ENCODE measurements at regions of chr4 and their contacts with region 1.

Region 1: DNA sequence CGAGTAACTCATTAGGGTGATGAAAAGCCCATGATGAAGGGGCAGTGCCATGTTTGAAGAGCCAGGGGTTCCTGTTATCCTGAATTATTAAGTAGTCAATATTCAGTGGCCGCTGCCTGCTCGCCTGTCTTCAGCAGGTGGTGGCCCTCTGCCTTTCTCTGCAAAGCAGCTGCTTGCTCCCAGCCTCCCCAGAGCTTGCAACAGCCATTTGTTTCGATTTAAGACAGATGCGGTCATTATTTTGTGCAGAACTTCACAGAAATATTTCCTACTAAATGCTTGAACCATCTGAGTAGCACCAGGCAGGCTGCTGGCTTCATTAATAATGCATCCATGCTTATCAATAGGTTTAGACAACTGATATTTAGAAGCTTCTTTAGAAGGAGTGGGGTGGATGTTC is 104.3 kb upstream of the TTC29 start:
- DNase-seq: no peak

Region 2: DNA sequence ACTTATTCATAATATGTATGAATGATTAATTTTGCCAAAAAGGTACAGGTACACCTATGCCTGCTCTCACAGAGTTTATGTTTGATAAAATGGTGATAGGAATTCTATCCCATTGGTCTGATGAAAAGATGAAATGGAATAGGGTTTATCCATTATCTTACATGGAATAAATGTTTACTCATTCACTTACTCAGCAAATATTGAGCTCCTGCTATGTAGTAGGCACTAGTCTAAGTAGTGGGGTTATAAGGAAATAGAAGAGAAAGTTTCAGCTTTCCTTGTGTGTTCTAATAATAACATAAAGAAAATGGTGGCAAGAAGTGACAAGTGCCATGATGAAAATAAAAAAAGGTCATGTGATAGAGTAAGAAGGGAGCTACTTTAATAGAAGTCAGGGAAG is 515.8 kb before region 1 on chr4:
- intact Hi-C with region 1: loop called in 1 of 2 experiments (anchors 2 kb)
- DNase-seq: no peak

Measured in posterior vena cava (tissue), 2 donors.